Calu3 (cell line): ENCODE measurements at regions of chr3 and their contacts with region 1.

Region 1: GRCh38 chr3:129824926-129825541 is 68.5 kb downstream of the TMCC1 start:
- DNase-seq: peak; percentile 88
- H3K4me3 Mint-ChIP-seq: no peak overlapping the region
- H3K27ac Mint-ChIP-seq: peak overlapping the region; percentile 5
- H3K4me1 Mint-ChIP-seq: peaks cover 39% of the 10 kb centered on the region
- H3K27me3 Mint-ChIP-seq: no peaks in the 10 kb centered on the region
- CTCF ChIP-seq: peak; percentile 90

Region 2: DNA sequence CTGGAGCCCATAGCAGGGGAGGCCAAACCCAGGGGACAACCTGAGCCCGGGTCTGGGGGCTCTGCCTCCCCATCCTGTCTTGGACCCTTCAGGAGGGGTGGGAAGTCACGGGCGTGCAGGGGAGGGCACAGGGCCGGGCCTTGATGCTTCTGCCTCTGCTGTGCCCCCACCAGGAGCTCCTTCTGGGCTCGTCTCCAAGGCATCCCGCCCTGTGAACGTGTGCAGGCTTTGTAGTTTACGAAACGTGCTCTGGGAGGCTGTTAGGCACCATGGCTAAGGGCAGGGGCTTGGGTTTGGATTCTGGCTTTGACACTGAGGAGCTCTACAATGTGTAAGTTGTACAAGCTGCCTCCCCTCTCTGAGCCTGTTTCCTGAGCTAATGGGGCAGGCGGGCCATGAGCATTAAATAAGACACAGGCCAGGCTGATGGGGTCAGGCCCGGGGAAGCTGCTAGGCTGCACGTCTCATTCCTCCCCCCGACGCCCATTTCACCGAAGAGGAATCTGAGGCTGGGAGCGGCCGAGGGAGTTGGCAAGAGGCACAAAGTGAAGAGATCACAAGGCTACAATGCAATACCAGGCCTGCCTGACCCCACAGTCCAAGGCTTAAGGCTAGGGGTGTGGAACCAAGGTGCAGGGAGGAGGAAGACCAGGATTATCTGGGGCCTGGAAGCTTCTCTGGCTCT is 238.1 kb before region 1 on chr3:
- CTCF ChIA-PET with region 1: no interaction called
- intact Hi-C with region 1: no loop called
- DNase-seq: no peak
- H3K4me3 Mint-ChIP-seq: no peak overlapping the region
- H3K27ac Mint-ChIP-seq: no peak overlapping the region
- H3K4me1 Mint-ChIP-seq: no peaks in the 10 kb centered on the region
- H3K27me3 Mint-ChIP-seq: no peaks in the 10 kb centered on the region
- CTCF ChIP-seq: no peak

Region 3: DNA sequence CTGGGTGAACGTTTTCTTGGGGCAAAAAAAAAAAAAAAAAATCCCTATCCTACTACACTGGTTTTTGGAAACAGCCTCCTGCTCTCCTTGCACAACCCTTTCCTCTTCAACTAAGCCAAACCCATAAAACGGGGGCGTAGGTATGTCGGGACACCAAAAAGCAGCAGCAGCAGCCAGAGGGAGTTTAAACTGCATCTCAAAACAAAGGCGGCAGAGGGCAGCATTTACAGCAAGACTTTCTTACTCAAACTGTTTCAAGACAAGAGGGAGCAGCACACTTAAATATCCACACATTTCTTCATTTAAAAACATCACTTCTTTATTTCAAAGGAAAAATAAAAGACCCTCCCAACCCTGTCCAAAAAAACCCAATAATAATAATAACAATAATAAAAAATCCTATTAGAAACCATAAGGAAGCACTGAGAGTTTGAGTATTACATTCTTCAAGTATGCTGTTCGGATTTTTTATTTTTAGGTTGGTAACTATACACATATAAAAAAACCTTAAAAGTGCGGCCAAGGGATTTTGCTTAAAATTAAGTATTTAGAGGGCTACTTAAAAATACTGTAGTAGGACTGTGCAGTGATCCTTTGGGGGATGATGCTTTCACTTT is 174.7 kb before region 1 on chr3:
- CTCF ChIA-PET with region 1: interaction called, 16 read pairs
- intact Hi-C with region 1: loop called (anchors 1 kb)
- DNase-seq: peak; percentile 84
- H3K4me3 Mint-ChIP-seq: no peak overlapping the region
- H3K27ac Mint-ChIP-seq: peak overlapping the region; percentile 63
- H3K4me1 Mint-ChIP-seq: peaks cover 42% of the 10 kb centered on the region
- H3K27me3 Mint-ChIP-seq: no peaks in the 10 kb centered on the region
- CTCF ChIP-seq: peak; percentile 83

Region 4: GRCh38 chr3:129794311-129795185 is 30.5 kb before region 1 on chr3:
- CTCF ChIA-PET with region 1: interaction called, 4 read pairs
- intact Hi-C with region 1: loop called (anchors 2 kb)
- DNase-seq: peak; percentile 95
- H3K4me3 Mint-ChIP-seq: peak overlapping the region; percentile 86
- H3K27ac Mint-ChIP-seq: peak overlapping the region; percentile 57
- H3K4me1 Mint-ChIP-seq: peaks cover 52% of the 10 kb centered on the region
- H3K27me3 Mint-ChIP-seq: no peaks in the 10 kb centered on the region
- CTCF ChIP-seq: no peak

Region 5: GRCh38 chr3:130395916-130396315 is 570.9 kb after region 1 on chr3:
- CTCF ChIA-PET with region 1: no interaction called
- intact Hi-C with region 1: no loop called
- DNase-seq: peak; percentile 25
- H3K4me3 Mint-ChIP-seq: no peak overlapping the region
- H3K27ac Mint-ChIP-seq: no peak overlapping the region
- H3K4me1 Mint-ChIP-seq: peaks cover 7% of the 10 kb centered on the region
- H3K27me3 Mint-ChIP-seq: peaks cover 41% of the 10 kb centered on the region
- CTCF ChIP-seq: no peak